ENCODE measurements at regions of chr12 and their contacts with region 1.

Region 1: GRCh38 chr12:33223933-33224332 is 215.7 kb downstream of the SYT10 start:
- DNase-seq: peak; percentile 82
- H3K4me3 Mint-ChIP-seq: no peak overlapping the region
- H3K27ac Mint-ChIP-seq: peak overlapping the region; percentile 91
- H3K4me1 Mint-ChIP-seq: peaks cover 52% of the 10 kb centered on the region
- H3K27me3 Mint-ChIP-seq: no peaks in the 10 kb centered on the region
- CTCF ChIP-seq: no peak

Region 2: DNA sequence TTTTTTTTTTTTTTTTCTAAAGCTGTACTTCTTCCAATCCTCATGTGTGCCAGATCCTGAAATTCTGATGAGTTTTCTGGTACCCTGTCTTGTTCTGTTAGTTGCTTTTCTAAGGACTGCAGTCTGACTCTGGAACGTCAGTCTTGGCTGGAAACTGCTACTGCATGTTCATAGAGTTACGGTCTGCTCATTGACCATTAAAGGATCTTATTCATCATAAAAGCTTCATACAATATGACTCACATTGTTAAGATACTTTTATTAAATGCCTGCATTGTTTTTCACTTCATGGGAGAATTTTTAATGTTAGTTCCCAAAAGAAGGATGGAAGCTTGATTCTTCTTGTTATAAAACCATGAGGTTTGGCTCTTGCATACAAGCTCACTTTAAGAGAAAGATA is 18.0 kb before region 1 on chr12:
- CTCF ChIA-PET with region 1: interaction called, 11 read pairs
- intact Hi-C with region 1: no loop called
- DNase-seq: no peak
- H3K4me3 Mint-ChIP-seq: peak overlapping the region; percentile 52
- H3K27ac Mint-ChIP-seq: peak overlapping the region; percentile 75
- H3K4me1 Mint-ChIP-seq: peaks cover 31% of the 10 kb centered on the region
- H3K27me3 Mint-ChIP-seq: no peaks in the 10 kb centered on the region
- CTCF ChIP-seq: no peak

Region 3: DNA sequence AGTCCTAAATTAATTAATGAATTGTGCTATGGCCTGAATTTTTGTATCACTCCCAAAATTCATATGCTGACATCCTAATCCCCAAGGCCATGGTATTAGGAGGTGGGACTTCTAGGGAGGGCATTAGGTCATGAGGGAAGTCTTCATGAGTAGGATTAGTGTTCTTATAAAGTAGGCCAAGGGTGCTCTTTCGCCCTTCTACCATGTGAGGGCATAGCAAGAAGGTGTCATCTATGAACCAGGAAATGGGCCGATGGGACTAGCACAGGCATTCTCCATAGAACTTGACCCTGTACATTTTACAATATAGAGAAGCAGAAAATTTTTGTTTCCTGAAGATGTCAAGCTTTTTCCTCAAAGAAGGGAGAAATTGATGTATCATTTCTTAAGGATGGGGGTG is 203.1 kb after region 1 on chr12:
- CTCF ChIA-PET with region 1: no interaction called
- intact Hi-C with region 1: loop called (anchors 10 kb)
- DNase-seq: peak; percentile 50
- H3K4me3 Mint-ChIP-seq: no peak overlapping the region
- H3K27ac Mint-ChIP-seq: no peak overlapping the region
- H3K4me1 Mint-ChIP-seq: peaks cover 34% of the 10 kb centered on the region
- H3K27me3 Mint-ChIP-seq: no peaks in the 10 kb centered on the region
- CTCF ChIP-seq: peak; percentile 47

Region 4: GRCh38 chr12:33942172-33942571 is 718.2 kb after region 1 on chr12:
- CTCF ChIA-PET with region 1: interaction called, 13 read pairs
- intact Hi-C with region 1: no loop called
- DNase-seq: no peak
- H3K4me3 Mint-ChIP-seq: no peak overlapping the region
- H3K27ac Mint-ChIP-seq: no peak overlapping the region
- H3K4me1 Mint-ChIP-seq: peaks cover 13% of the 10 kb centered on the region
- H3K27me3 Mint-ChIP-seq: no peaks in the 10 kb centered on the region
- CTCF ChIP-seq: peak; percentile 33

Measured in Calu3 (cell line).